Naive thymus-derived CD4-positive, alpha-beta T cell (primary cell): ENCODE measurements at regions of chr1 and their contacts with region 1.

Region 1: DNA sequence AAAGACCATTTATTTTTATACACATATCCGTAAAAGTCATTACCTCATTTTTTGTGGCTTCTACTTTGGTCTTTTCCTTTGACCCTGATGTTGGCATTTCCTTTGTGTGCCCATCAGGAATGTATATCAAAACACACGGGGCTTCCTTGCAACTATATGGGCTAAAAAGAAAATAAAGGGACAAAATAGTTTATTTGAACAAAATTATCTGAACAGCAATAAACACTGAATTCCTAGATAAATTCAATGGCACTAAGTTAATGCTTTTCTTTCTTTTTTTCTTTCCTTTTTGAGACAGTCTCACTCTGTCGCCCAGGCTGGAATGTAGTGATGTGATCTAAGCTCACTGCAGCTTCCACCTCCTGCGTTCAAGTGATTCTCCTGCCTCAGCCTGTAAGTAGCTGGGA is 45.2 kb downstream of the EPRS1 start:
- DNase-seq: no peak
- ATAC-seq: no peak
- H3K4me3 ChIP-seq: no peak overlapping the region
- H3K4me3 Mint-ChIP-seq: no peak overlapping the region
- H3K27ac ChIP-seq: no peak overlapping the region
- H3K27ac Mint-ChIP-seq: peak overlapping the region in 1 of 9 donors; percentile 8
- H3K4me1 ChIP-seq: no peaks in the 10 kb centered on the region
- H3K4me1 Mint-ChIP-seq: peaks cover 0 to 15% (median 0%) of the 10 kb centered on the region in 7 donors
- H3K27me3 ChIP-seq: no peaks in the 10 kb centered on the region
- H3K27me3 Mint-ChIP-seq: no peaks in the 10 kb centered on the region

Region 2: GRCh38 chr1:220038640-220039039 is 37.5 kb after region 1 on chr1:
- CTCF ChIA-PET with region 1: no interaction called
- POLR2A ChIA-PET with region 1: no interaction called
- intact Hi-C with region 1: loop called in 1 of 2 experiments (anchors 5 kb)
- DNase-seq: no peak
- ATAC-seq: no peak
- H3K4me3 ChIP-seq: no peak overlapping the region
- H3K4me3 Mint-ChIP-seq: peak overlapping the region in 3 of 10 donors; percentile 1 to 25 (median 8)
- H3K27ac ChIP-seq: no peak overlapping the region
- H3K27ac Mint-ChIP-seq: peak overlapping the region in 6 of 9 donors; percentile 19 to 75 (median 54)
- H3K4me1 ChIP-seq: peaks cover 0 to 4% of the 10 kb centered on the region in 2 donors
- H3K4me1 Mint-ChIP-seq: peaks cover 15 to 46% (median 39%) of the 10 kb centered on the region in 7 donors
- H3K27me3 ChIP-seq: no peaks in the 10 kb centered on the region
- H3K27me3 Mint-ChIP-seq: no peaks in the 10 kb centered on the region